CD14-positive monocyte (primary cell): ENCODE measurements at regions of chr21 and their contacts with region 1.

Region 1: GRCh38 chr21:32257962-32258785 is 20.7 kb downstream of the MIS18A start:
- DNase-seq: peak in 1 of 3 donors; percentile 14
- H3K4me3 ChIP-seq: no peak overlapping the region
- H3K4me3 Mint-ChIP-seq: no peak overlapping the region
- H3K27ac ChIP-seq: no peak overlapping the region
- H3K27ac Mint-ChIP-seq: no peak overlapping the region
- H3K4me1 ChIP-seq: no peaks in the 10 kb centered on the region
- H3K4me1 Mint-ChIP-seq: peaks cover 9% of the 10 kb centered on the region
- H3K27me3 ChIP-seq: no peaks in the 10 kb centered on the region
- H3K27me3 Mint-ChIP-seq: peaks cover 2 to 6% (median 4%) of the 10 kb centered on the region in 3 donors
- CTCF ChIP-seq: peak; percentile 52

Region 2: GRCh38 chr21:31873696-31874599 is 384.2 kb before region 1 on chr21:
- intact Hi-C with region 1: loop called (anchors 5 to 10 kb)
- DNase-seq: peak in 1 of 3 donors; percentile 5
- H3K4me3 ChIP-seq: peak overlapping the region in 2 of 3 experiments; percentile 12 to 56
- H3K4me3 Mint-ChIP-seq: peak overlapping the region; percentile 34 to 67
- H3K27ac ChIP-seq: no peak overlapping the region
- H3K27ac Mint-ChIP-seq: no peak overlapping the region
- H3K4me1 ChIP-seq: peaks cover 3 to 13% of the 10 kb centered on the region in 2 donors
- H3K4me1 Mint-ChIP-seq: peaks cover 6% of the 10 kb centered on the region
- H3K27me3 ChIP-seq: peaks cover 45 to 73% of the 10 kb centered on the region in 2 donors
- H3K27me3 Mint-ChIP-seq: peaks cover 61 to 83% (median 63%) of the 10 kb centered on the region in 3 donors
- CTCF ChIP-seq: peak; percentile 59